ENCODE measurements at regions of chr5 and their contacts with region 1.

Region 1: DNA sequence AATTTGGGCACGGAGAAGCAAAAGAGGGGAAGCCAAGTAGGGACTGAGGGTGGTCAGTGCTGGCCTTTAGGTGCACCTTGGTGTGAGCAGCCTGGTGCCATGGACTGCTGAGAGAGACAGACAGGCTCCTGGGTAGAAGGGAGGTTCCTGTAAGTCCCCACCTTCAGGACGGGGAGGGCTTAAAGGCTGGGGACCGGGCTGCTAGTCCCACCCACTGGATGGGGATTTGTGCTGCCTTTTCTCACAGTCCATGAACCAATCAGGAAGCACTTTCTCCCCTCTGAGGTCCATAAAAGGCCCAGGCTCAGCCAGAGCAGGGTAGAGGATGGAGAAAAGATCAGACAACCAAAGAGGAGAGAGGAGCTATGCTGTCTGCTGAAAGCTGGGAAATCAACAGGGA is 15.2 kb downstream of the CDC25C start:
- DNase-seq: peak; percentile 27
- ATAC-seq: peak; percentile 97
- H3K4me3 Mint-ChIP-seq: no peak overlapping the region
- H3K27ac Mint-ChIP-seq: peak overlapping the region; percentile 32; the same call in 1 of the 2 replicates
- H3K4me1 Mint-ChIP-seq: no peaks in the 10 kb centered on the region
- H3K27me3 Mint-ChIP-seq: no peaks in the 10 kb centered on the region
- CTCF ChIP-seq: no peak

Region 2: GRCh38 chr5:138331449-138332368 is 15.4 kb after region 1 on chr5 and contains the start of gene CDC25C:
- CTCF ChIA-PET with region 1: no interaction called
- POLR2A ChIA-PET with region 1: interaction called, 11 read pairs
- DNase-seq: peak; percentile 98
- ATAC-seq: peak; percentile 99
- H3K4me3 Mint-ChIP-seq: peak within 1 kb of the TSS; percentile 91
- H3K27ac Mint-ChIP-seq: peak within 1 kb of the TSS; percentile 97
- H3K4me1 Mint-ChIP-seq: peaks cover 18% of the 10 kb centered on the region
- H3K27me3 Mint-ChIP-seq: no peaks in the 10 kb centered on the region
- CTCF ChIP-seq: no peak
- total RNA-seq, gene CDC25C: 15.0 to 18.8 TPM (median 16.1 TPM) in 3 replicates

Region 3: DNA sequence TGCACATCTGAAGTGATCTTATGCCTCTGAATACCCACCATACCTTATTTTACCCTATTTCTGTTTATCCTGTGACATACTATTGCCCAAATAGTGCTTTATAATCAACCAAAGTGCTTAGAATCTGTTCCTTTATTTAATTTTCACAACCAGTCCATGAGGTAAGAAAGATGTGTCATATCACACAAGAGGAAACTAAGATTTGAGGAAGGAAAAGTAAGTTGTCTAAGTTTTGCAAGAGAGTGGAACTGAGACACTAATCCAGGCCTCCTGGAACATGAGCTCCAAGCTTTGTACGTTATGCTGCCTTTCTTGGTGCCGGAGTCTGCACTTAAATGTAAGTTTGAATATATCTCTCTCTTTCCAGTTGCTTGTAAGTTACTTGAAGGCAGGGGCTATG is 53.4 kb after region 1 on chr5:
- CTCF ChIA-PET with region 1: no interaction called
- POLR2A ChIA-PET with region 1: interaction called, 11 read pairs
- DNase-seq: no peak
- ATAC-seq: no peak
- H3K4me3 Mint-ChIP-seq: no peak overlapping the region
- H3K27ac Mint-ChIP-seq: no peak overlapping the region; the same call in 1 of the 2 replicates
- H3K4me1 Mint-ChIP-seq: no peaks in the 10 kb centered on the region
- H3K27me3 Mint-ChIP-seq: no peaks in the 10 kb centered on the region
- CTCF ChIP-seq: no peak

Region 4: GRCh38 chr5:138408023-138408422 is 91.7 kb after region 1 on chr5:
- CTCF ChIA-PET with region 1: no interaction called
- POLR2A ChIA-PET with region 1: no interaction called
- DNase-seq: no peak
- ATAC-seq: no peak
- H3K4me3 Mint-ChIP-seq: no peak overlapping the region
- H3K27ac Mint-ChIP-seq: no peak overlapping the region
- H3K4me1 Mint-ChIP-seq: no peaks in the 10 kb centered on the region
- H3K27me3 Mint-ChIP-seq: no peaks in the 10 kb centered on the region
- CTCF ChIP-seq: no peak